Panc1 (cell line): ENCODE measurements at regions of chr5 and their contacts with region 1.

Region 1: DNA sequence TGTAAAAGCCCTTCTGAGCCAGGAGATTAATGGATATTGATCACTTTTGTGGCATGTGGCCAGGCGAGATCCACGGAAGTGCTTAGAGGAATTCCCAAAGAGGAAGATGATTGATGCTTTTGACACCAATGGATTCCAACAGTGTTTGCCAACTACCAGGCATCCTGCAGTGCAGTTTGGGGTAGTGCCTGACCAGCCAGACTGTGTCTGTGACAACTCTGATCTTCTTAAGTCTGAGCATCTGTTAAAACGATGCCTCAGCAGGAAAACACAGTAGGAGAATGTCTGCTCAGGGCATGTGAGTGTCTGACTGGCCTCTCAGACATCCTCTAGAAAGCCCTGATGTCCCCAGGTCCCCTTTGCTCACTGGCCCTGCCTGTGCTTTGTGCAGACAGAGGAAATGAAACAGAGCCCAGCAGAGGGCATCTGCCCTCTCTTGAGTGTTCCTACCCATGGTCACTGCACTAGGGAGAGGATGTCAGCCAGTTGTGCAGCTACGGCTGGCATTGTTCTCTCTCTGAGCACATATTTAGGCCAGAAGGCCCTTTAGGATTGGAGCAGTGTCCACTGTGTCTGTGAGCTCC is 57.0 kb downstream of the TRPC7 start:
- DNase-seq: no peak
- ATAC-seq: no peak; the same call in 1 of the 2 replicates
- H3K4me3 ChIP-seq: no peak overlapping the region
- H3K27ac ChIP-seq: no peak overlapping the region
- H3K4me1 ChIP-seq: no peaks in the 10 kb centered on the region
- H3K27me3 ChIP-seq: peaks cover 2% of the 10 kb centered on the region; the same call in 1 of the 2 replicates
- CTCF ChIP-seq: peak; percentile 23; the same call in 1 of the 2 replicates

Region 2: DNA sequence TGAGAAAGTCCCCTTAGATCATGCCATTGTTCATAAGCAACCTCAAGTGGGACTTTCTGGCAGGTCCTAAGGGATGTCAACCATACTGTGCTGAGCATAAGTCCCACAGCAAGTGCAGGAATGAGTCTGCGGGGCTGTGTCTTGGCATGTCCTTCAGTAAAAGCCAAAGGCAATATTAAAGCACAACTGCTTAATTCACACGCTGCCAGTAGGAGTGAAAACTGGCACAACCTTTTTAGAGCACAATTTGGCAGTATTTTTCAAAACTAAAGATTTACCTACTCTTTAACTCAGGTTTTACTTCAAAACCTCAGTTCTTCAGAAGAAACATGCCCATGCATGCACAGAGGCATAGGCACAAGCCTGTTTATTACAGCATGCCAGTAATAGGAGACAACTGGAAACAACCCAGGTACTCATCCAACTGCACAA is 200.1 kb before region 1 on chr5:
- CTCF ChIA-PET with region 1: no interaction called
- POLR2A ChIA-PET with region 1: no interaction called
- in situ Hi-C with region 1: no loop called
- intact Hi-C with region 1: no loop called
- DNase-seq: no peak
- ATAC-seq: no peak
- H3K4me3 ChIP-seq: no peak overlapping the region
- H3K27ac ChIP-seq: no peak overlapping the region
- H3K4me1 ChIP-seq: no peaks in the 10 kb centered on the region
- H3K27me3 ChIP-seq: no peaks in the 10 kb centered on the region
- CTCF ChIP-seq: no peak

Region 3: DNA sequence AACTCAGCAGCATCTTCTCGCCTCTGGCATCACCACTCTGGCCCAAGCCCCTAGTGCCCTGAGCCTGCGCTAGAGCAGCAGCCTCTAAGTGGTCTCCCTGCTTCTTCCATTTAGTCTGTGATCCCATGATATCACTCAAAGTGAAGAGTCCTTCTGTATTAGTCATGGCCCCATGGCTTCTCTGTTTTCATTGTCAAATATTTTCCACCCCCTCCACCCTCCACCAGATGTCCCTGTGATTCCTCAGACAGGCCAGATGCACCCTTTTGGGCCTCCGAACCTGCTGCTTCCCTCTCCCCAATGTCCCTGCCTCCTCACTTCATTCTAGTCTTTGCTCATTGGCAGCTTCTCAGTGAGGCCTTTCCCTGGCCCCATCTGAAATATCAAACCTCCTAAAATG is 891.7 kb after region 1 on chr5:
- CTCF ChIA-PET with region 1: interaction called, 13 read pairs
- POLR2A ChIA-PET with region 1: no interaction called
- in situ Hi-C with region 1: no loop called
- intact Hi-C with region 1: no loop called
- DNase-seq: no peak
- ATAC-seq: no peak
- H3K4me3 ChIP-seq: no peak overlapping the region
- H3K27ac ChIP-seq: no peak overlapping the region
- H3K4me1 ChIP-seq: no peaks in the 10 kb centered on the region
- H3K27me3 ChIP-seq: peaks cover 2% of the 10 kb centered on the region; the same call in 1 of the 2 replicates
- CTCF ChIP-seq: no peak